ENCODE measurements at regions of chr22 and their contacts with region 1.

Region 1: GRCh38 chr22:25067851-25068421 is 115.4 kb downstream of the KIAA1671 start:
- DNase-seq: no peak
- ATAC-seq: no peak
- H3K4me3 Mint-ChIP-seq: no peak overlapping the region
- H3K27ac Mint-ChIP-seq: no peak overlapping the region
- H3K4me1 Mint-ChIP-seq: peaks cover 8% of the 10 kb centered on the region
- H3K27me3 Mint-ChIP-seq: no peaks in the 10 kb centered on the region
- CTCF ChIP-seq: no peak

Region 2: DNA sequence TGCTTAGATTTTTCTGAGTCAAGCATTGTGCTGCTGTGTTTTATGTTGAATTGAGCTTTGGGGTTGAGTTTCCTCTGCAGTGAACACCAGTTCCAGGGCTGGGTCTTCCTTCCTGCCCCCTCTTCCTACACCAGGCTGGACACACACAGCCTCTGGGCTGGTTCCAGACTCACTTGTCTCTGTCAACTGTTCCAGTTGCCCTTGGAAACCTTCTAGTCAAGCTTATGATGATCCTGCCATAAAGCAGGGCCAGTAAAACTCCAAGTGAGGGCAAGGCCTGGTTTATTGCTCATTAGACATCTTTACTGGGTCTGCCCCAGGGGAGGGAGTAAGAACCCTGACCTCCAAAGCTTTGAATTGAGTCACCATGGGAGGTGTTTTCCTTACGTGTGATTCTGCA is 54.3 kb before region 1 on chr22:
- CTCF ChIA-PET with region 1: no interaction called
- POLR2A ChIA-PET with region 1: no interaction called
- DNase-seq: no peak
- ATAC-seq: no peak
- H3K4me3 Mint-ChIP-seq: no peak overlapping the region
- H3K27ac Mint-ChIP-seq: no peak overlapping the region
- H3K4me1 Mint-ChIP-seq: peaks cover 33% of the 10 kb centered on the region
- H3K27me3 Mint-ChIP-seq: no peaks in the 10 kb centered on the region
- CTCF ChIP-seq: no peak

Region 3: DNA sequence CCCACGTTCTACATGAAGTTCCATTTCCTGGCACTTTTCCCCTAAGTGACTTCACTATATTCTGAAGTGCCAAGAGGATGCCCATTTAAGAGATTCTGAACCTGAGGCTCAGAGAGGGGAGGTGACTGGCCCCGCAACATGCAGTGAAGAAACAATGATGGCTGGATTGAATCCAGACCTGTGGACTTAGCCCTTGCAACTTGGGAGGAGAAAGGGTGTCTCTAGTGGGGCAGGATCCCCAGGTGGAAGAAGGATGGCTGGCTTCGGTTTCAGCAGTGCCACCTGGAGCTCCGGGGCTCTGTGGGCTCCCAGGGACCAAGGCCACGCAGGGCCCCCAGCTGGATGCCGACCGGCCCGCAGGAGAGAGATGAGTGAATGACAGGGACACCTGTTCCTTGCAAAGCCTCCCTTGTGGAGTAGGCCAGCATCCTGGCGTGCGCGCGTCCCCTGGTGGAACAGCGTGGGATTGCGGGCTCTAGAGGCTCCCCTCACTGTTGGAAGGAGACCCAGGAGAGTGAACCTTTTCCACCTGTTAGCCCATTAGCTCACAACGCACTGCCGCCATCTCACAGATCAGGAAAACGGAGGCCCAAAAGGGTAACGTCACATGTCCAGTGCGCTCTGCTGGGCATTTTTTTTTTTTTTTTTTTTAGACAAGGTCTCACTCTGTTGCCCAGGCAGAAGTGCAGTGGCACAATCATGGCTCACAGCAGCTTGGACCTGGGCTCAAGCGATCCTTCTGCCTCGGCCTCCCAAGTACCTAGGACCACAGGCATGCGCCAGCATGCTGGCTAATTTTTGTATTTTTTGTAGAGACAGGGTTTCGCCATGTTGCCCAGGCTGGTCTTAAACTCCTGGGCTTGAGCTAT is 10.7 kb before region 1 on chr22:
- CTCF ChIA-PET with region 1: interaction called, 10 read pairs
- POLR2A ChIA-PET with region 1: no interaction called
- DNase-seq: peak; percentile 95
- ATAC-seq: peak; percentile 96
- H3K4me3 Mint-ChIP-seq: no peak overlapping the region
- H3K27ac Mint-ChIP-seq: peak overlapping the region; percentile 81; the same call in 1 of the 2 replicates
- H3K4me1 Mint-ChIP-seq: peaks cover 22% of the 10 kb centered on the region
- H3K27me3 Mint-ChIP-seq: no peaks in the 10 kb centered on the region
- CTCF ChIP-seq: peak; percentile 83

Measured in WTC11 (cell line).